Heart right ventricle (tissue), 16 donors: ENCODE measurements at regions of chr2 and their contacts with region 1.

Region 1: GRCh38 chr2:222283634-222284033 is 15.2 kb downstream of the PAX3 start:
- DNase-seq: no peak
- ATAC-seq: no peak
- H3K4me3 ChIP-seq: no peak overlapping the region
- H3K27ac ChIP-seq: no peak overlapping the region
- H3K4me1 ChIP-seq: no peaks in the 10 kb centered on the region
- H3K27me3 ChIP-seq: peaks cover 6 to 94% (median 74%) of the 10 kb centered on the region in 7 donors
- CTCF ChIP-seq: no peak

Region 2: GRCh38 chr2:222038067-222038802 is 245.4 kb before region 1 on chr2:
- intact Hi-C with region 1: no loop called
- DNase-seq: no peak
- ATAC-seq: no peak
- H3K4me3 ChIP-seq: no peak overlapping the region
- H3K27ac ChIP-seq: no peak overlapping the region
- H3K4me1 ChIP-seq: no peaks in the 10 kb centered on the region
- H3K27me3 ChIP-seq: peaks cover 0 to 11% (median 4%) of the 10 kb centered on the region in 7 donors
- CTCF ChIP-seq: peak in 6 of 9 donors; percentile 19 to 35 (median 26)

Region 3: GRCh38 chr2:222064286-222064685 is 219.3 kb before region 1 on chr2:
- intact Hi-C with region 1: loop called in 1 of 10 experiments (anchors 10 kb)
- DNase-seq: no peak
- ATAC-seq: no peak
- H3K4me3 ChIP-seq: no peak overlapping the region
- H3K27ac ChIP-seq: no peak overlapping the region
- H3K4me1 ChIP-seq: no peaks in the 10 kb centered on the region
- H3K27me3 ChIP-seq: peaks cover 0 to 31% (median 14%) of the 10 kb centered on the region in 7 donors
- CTCF ChIP-seq: no peak

Region 4: GRCh38 chr2:222218786-222219185 is 64.8 kb before region 1 on chr2:
- intact Hi-C with region 1: no loop called
- DNase-seq: no peak
- ATAC-seq: no peak
- H3K4me3 ChIP-seq: no peak overlapping the region
- H3K27ac ChIP-seq: no peak overlapping the region
- H3K4me1 ChIP-seq: no peaks in the 10 kb centered on the region
- H3K27me3 ChIP-seq: peaks cover 0 to 34% (median 12%) of the 10 kb centered on the region in 7 donors
- CTCF ChIP-seq: no peak